B cell (primary cell): ENCODE measurements at regions of chr11 and their contacts with region 1.

Region 1: GRCh38 chr11:59263225-59263894 is 50.6 kb upstream of the MPEG1 start:
- DNase-seq: peak; percentile 78
- ATAC-seq: peak; percentile 65
- H3K4me3 ChIP-seq: no peak overlapping the region
- H3K4me3 Mint-ChIP-seq: peak overlapping the region; percentile 50
- H3K27ac ChIP-seq: no peak overlapping the region
- H3K27ac Mint-ChIP-seq: peak overlapping the region; percentile 37
- H3K4me1 ChIP-seq: peaks cover 52 to 69% of the 10 kb centered on the region in 2 donors
- H3K4me1 Mint-ChIP-seq: peaks cover 68% of the 10 kb centered on the region
- H3K27me3 ChIP-seq: no peaks in the 10 kb centered on the region
- H3K27me3 Mint-ChIP-seq: no peaks in the 10 kb centered on the region
- CTCF ChIP-seq: peak; percentile 68

Region 2: GRCh38 chr11:59224351-59224928 is 38.9 kb before region 1 on chr11:
- CTCF ChIA-PET with region 1: interaction called, 17 read pairs
- POLR2A ChIA-PET with region 1: interaction called, 3 read pairs
- intact Hi-C with region 1: loop called (anchors 1 kb)
- DNase-seq: peak; percentile 51
- ATAC-seq: peak; percentile 26
- H3K4me3 ChIP-seq: no peak overlapping the region
- H3K4me3 Mint-ChIP-seq: peak overlapping the region; percentile 4
- H3K27ac ChIP-seq: peak overlapping the region; percentile 46 to 63
- H3K27ac Mint-ChIP-seq: peak overlapping the region; percentile 56
- H3K4me1 ChIP-seq: peaks cover 57% of the 10 kb centered on the region in 2 donors
- H3K4me1 Mint-ChIP-seq: peaks cover 55% of the 10 kb centered on the region
- H3K27me3 ChIP-seq: no peaks in the 10 kb centered on the region
- H3K27me3 Mint-ChIP-seq: no peaks in the 10 kb centered on the region
- CTCF ChIP-seq: no peak

Region 3: GRCh38 chr11:59273373-59273841 is 10.0 kb after region 1 on chr11:
- CTCF ChIA-PET with region 1: interaction called, 84 read pairs
- POLR2A ChIA-PET with region 1: interaction called, 10 read pairs
- intact Hi-C with region 1: loop called (anchors 1 kb)
- DNase-seq: peak; percentile 88
- ATAC-seq: peak; percentile 85
- H3K4me3 ChIP-seq: peak overlapping the region in 1 of 5 experiments; percentile 44
- H3K4me3 Mint-ChIP-seq: peak overlapping the region; percentile 83
- H3K27ac ChIP-seq: peak overlapping the region; percentile 90 to 94
- H3K27ac Mint-ChIP-seq: peak overlapping the region; percentile 95
- H3K4me1 ChIP-seq: peaks cover 76 to 85% of the 10 kb centered on the region in 2 donors
- H3K4me1 Mint-ChIP-seq: peaks cover 92% of the 10 kb centered on the region
- H3K27me3 ChIP-seq: no peaks in the 10 kb centered on the region
- H3K27me3 Mint-ChIP-seq: no peaks in the 10 kb centered on the region
- CTCF ChIP-seq: no peak

Region 4: DNA sequence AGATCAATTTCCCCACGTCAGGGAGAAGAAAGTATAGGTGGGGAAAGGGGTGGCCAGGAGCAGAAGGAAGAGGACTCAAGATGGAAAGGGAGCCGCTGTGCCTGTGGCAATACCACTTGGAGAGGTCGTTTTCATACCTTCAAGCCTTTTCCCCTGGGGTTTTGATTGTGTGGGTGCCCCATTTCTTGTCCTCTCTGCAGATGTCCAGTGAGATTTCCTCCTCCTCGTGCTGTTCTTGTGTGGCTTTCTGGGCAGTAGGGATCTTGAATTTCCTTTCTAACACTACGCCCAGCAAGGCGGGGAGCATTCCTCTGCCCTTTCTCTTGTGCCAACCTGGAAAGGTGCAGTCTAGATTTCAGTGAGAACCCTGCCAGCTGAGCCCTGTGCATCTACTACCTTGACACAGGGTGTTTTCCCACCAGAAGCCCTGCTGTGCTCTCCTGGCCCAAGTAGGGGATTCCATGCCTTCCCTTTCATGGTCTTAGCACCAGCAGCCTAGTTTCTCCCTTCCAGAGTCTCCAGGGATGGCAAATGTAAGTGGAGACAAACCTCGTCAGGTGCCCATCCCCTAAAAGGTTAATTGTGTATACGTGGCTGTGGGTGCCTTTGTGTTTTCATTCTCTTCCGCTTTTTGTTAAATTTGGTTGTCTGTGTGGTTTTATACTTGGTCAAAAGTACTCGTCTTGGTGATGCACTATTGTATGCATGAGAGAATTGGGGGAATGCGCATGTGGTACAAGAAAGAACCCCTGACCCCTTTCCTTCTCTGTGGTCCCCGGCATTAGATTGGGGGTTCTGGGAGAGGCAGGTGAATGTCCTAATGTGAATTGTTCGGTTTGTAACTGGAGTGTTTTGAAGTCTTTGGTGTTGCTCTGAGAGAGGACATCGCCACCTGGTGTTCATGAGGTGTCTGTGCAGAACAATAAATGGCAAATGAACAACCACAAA is 20.7 kb after region 1 on chr11:
- CTCF ChIA-PET with region 1: interaction called, 84 read pairs
- POLR2A ChIA-PET with region 1: no interaction called
- intact Hi-C with region 1: loop called (anchors 1 kb)
- DNase-seq: peak; percentile 92
- ATAC-seq: peak; percentile 83
- H3K4me3 ChIP-seq: peak overlapping the region in 4 of 5 experiments; percentile 25 to 49 (median 34)
- H3K4me3 Mint-ChIP-seq: peak overlapping the region; percentile 80
- H3K27ac ChIP-seq: peak overlapping the region; percentile 75 to 89
- H3K27ac Mint-ChIP-seq: peak overlapping the region; percentile 91
- H3K4me1 ChIP-seq: peaks cover 30 to 51% of the 10 kb centered on the region in 2 donors
- H3K4me1 Mint-ChIP-seq: peaks cover 63% of the 10 kb centered on the region
- H3K27me3 ChIP-seq: no peaks in the 10 kb centered on the region
- H3K27me3 Mint-ChIP-seq: no peaks in the 10 kb centered on the region
- CTCF ChIP-seq: peak; percentile 89

Region 5: DNA sequence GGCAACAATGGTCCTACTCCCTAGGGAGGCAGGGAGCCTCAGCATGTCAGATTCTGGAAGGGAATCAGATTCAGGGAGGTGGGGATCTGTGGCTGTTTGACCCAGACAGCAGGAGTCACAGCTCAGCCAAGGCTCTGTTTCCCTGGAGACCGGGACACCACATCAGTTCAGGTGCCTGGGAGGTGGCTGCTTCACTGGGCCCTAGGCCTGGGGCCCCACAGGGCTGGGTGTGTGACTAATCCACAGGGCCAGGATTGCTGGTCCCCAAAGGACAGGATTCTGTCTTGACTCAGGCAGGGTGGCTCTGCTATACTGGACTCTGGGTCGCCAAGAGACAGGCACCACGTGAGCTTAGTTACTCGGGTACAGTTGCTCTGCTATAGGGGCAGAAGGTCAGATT is 91.9 kb after region 1 on chr11:
- CTCF ChIA-PET with region 1: no interaction called
- POLR2A ChIA-PET with region 1: no interaction called
- intact Hi-C with region 1: no loop called
- DNase-seq: no peak
- ATAC-seq: no peak
- H3K4me3 ChIP-seq: no peak overlapping the region
- H3K4me3 Mint-ChIP-seq: no peak overlapping the region
- H3K27ac ChIP-seq: no peak overlapping the region
- H3K27ac Mint-ChIP-seq: no peak overlapping the region
- H3K4me1 ChIP-seq: no peaks in the 10 kb centered on the region
- H3K4me1 Mint-ChIP-seq: no peaks in the 10 kb centered on the region
- H3K27me3 ChIP-seq: peaks cover 0 to 5% (median 2%) of the 10 kb centered on the region in 4 experiments
- H3K27me3 Mint-ChIP-seq: peaks cover 29% of the 10 kb centered on the region
- CTCF ChIP-seq: no peak

Region 6: DNA sequence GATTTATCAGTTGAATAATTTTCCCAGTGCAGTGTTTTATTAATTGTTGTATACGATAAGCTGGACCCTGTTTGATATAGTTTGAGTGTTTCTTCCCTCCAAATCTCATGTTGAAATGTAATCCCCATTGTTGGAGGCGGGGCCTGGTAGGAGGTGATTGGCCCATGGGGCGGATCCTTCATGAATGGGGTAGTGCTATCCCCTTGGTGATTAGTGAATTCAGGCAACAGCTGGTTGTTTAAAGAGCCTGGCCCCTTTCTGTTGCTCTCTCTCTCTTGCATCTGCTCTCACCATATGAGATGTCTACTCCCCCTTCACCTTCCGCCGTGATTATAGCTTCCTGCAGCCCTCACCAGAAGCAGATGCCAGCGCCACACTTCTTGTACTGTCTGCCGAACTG is 174.4 kb after region 1 on chr11:
- CTCF ChIA-PET with region 1: interaction called, 131 read pairs
- POLR2A ChIA-PET with region 1: no interaction called
- intact Hi-C with region 1: no loop called
- DNase-seq: no peak
- ATAC-seq: no peak
- H3K4me3 ChIP-seq: no peak overlapping the region
- H3K4me3 Mint-ChIP-seq: no peak overlapping the region
- H3K27ac ChIP-seq: no peak overlapping the region
- H3K27ac Mint-ChIP-seq: no peak overlapping the region
- H3K4me1 ChIP-seq: no peaks in the 10 kb centered on the region
- H3K4me1 Mint-ChIP-seq: no peaks in the 10 kb centered on the region
- H3K27me3 ChIP-seq: no peaks in the 10 kb centered on the region
- H3K27me3 Mint-ChIP-seq: peaks cover 7% of the 10 kb centered on the region
- CTCF ChIP-seq: no peak

Region 7: DNA sequence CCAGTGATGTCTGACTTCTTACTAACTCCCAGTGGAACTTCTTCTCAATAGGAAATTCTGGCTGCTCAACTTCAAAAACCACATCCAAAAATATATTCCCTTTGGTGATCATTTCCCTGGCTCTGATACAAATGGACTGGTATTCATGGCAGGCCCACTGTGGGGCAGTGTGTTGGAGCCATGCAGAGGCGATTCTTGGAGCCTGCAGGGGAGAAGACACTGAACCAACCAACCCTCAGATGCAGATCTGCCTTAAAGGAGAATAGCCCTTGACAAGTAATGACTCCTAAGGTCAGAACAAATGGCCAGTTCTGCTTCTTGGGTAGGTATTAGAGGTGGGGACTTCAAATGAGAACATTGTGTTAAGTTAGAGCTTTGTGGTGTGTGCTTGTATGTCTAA is 260.2 kb after region 1 on chr11:
- CTCF ChIA-PET with region 1: no interaction called
- POLR2A ChIA-PET with region 1: no interaction called
- intact Hi-C with region 1: no loop called
- DNase-seq: no peak
- ATAC-seq: no peak
- H3K4me3 ChIP-seq: no peak overlapping the region
- H3K4me3 Mint-ChIP-seq: no peak overlapping the region
- H3K27ac ChIP-seq: no peak overlapping the region
- H3K27ac Mint-ChIP-seq: no peak overlapping the region
- H3K4me1 ChIP-seq: no peaks in the 10 kb centered on the region
- H3K4me1 Mint-ChIP-seq: no peaks in the 10 kb centered on the region
- H3K27me3 ChIP-seq: peaks cover 0 to 2% (median 0%) of the 10 kb centered on the region in 4 experiments
- H3K27me3 Mint-ChIP-seq: peaks cover 6% of the 10 kb centered on the region
- CTCF ChIP-seq: no peak